ENCODE measurements at regions of chr6 and their contacts with region 1.

Region 1: GRCh38 chr6:73520688-73521350 is at the start of gene EEF1A1:
- DNase-seq: peak; percentile 99 to 100
- H3K4me3 ChIP-seq: peak within 1 kb of the TSS; percentile 77 to 85
- H3K27ac ChIP-seq: peak within 1 kb of the TSS; percentile 100
- H3K4me1 ChIP-seq: peaks cover 51% of the 10 kb centered on the region
- H3K27me3 ChIP-seq: no peaks in the 10 kb centered on the region
- CTCF ChIP-seq: no peak
- POLR2A ChIP-seq: peak; percentile 92 to 99
- total RNA-seq, gene EEF1A1: 8,108 TPM

Region 2: DNA sequence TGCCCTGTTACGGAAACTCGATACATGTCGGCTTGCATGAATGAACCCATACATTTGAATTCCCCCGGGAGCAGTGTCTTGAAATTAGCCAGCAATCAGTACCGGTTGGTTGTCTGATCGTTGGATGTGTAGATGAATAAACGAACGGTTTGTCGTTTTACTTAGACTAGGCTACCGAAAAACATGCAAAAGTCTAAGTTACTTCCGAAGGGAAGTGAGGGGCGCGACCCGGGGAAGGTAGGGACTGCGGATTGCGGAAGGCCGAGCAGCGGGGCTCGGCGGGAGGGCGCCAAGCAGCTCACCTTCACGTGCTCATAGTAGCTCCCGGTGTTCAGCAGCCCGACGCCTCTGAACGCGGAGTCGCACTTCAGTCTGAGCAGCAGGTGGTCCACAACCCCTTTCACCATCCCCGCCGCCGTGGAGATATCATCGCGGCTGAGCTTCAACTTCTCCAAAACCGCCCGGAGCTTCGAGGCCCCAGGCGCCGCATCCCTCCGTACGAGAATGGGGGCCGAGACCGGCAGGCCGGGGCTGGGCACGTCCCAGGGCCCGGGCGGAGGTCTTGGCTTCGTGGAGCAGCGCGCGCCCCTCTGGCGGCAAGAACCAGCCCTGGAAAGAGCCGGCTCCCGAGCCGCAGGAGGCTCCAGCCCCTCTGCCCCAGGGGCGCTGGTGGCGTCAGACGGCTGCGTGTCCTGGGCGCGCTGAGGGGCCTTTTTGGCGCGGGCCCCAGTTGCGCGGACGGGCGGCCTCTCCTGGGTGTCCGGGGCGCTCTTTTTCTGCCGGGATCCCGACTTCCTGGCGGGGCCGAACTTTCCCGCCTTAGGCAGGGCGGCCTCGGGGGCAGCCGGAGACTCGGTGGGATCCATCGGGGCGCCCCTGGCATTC is 69.4 kb before region 1 on chr6:
- intact Hi-C with region 1: loop called (anchors 10 kb)
- DNase-seq: no peak
- H3K4me3 ChIP-seq: peak overlapping the region; percentile 62 to 81
- H3K27ac ChIP-seq: peak overlapping the region; percentile 91
- H3K4me1 ChIP-seq: peaks cover 16% of the 10 kb centered on the region
- H3K27me3 ChIP-seq: no peaks in the 10 kb centered on the region
- CTCF ChIP-seq: no peak
- POLR2A ChIP-seq: no peak

Region 3: DNA sequence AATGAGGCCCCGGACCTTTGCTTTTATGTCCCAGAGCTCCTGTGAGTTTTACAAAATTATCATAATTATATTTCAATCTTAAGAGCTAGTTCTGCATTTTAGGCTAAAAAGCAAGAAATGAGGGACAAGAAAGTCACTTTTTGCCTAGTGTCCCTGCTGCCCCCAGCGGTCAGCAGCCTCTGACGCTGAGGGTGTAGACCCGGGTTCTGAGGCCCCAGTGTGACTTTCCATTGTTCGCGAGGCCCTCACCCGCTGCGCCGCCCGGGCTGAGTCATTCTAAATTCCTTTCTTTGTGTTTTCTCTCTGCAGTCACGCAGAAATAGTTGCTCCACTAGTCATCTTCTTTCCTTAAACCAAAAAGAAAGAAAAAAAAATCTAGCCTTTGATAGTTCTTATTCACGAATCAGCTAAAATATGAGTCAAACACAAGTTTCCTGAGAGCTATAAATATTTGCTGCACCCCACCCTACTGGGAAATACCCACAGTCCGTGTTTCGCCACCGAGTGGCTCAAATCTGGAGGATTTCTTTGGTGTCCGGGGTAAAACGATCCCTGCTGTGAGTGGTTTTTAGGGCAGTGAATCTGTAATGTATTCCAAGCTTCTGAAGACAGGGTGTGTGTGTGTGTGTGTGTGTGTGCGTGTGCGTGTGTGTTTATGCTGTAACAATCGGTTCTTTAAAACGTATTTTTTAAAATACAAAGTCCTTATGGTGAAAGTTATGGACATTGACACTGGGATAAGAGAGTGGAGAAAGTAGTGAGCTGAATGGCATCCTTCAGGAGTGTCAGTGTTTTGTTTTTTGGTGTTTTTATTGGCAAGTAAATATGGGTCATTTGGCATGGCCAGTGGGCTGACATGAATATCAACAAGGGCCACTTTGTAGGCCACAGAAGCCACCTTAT is 59.7 kb after region 1 on chr6:
- intact Hi-C with region 1: loop called (anchors 2 kb)
- DNase-seq: peak in 1 of 2 donors; percentile 94
- H3K4me3 ChIP-seq: peak overlapping the region; percentile 18 to 29
- H3K27ac ChIP-seq: peak overlapping the region; percentile 96
- H3K4me1 ChIP-seq: peaks cover 37% of the 10 kb centered on the region
- H3K27me3 ChIP-seq: no peaks in the 10 kb centered on the region
- CTCF ChIP-seq: peak in 1 of 3 experiments; percentile 17
- POLR2A ChIP-seq: peak in 1 of 2 donors; percentile 5

Measured in vagina (tissue), 2 donors.